Tibial artery (tissue), 4 donors: ENCODE measurements at regions of chr12 and their contacts with region 1.

Region 1: GRCh38 chr12:132828706-132829534 is at the start of gene GOLGA3:
- DNase-seq: peak; percentile 89 to 94
- H3K4me3 ChIP-seq: peak within 1 kb of the TSS; percentile 91 to 97
- H3K27ac ChIP-seq: peak within 1 kb of the TSS; percentile 97
- H3K4me1 ChIP-seq: peaks cover 0 to 26% (median 22%) of the 10 kb centered on the region in 4 donors
- H3K27me3 ChIP-seq: no peaks in the 10 kb centered on the region
- CTCF ChIP-seq: no peak

Region 2: DNA sequence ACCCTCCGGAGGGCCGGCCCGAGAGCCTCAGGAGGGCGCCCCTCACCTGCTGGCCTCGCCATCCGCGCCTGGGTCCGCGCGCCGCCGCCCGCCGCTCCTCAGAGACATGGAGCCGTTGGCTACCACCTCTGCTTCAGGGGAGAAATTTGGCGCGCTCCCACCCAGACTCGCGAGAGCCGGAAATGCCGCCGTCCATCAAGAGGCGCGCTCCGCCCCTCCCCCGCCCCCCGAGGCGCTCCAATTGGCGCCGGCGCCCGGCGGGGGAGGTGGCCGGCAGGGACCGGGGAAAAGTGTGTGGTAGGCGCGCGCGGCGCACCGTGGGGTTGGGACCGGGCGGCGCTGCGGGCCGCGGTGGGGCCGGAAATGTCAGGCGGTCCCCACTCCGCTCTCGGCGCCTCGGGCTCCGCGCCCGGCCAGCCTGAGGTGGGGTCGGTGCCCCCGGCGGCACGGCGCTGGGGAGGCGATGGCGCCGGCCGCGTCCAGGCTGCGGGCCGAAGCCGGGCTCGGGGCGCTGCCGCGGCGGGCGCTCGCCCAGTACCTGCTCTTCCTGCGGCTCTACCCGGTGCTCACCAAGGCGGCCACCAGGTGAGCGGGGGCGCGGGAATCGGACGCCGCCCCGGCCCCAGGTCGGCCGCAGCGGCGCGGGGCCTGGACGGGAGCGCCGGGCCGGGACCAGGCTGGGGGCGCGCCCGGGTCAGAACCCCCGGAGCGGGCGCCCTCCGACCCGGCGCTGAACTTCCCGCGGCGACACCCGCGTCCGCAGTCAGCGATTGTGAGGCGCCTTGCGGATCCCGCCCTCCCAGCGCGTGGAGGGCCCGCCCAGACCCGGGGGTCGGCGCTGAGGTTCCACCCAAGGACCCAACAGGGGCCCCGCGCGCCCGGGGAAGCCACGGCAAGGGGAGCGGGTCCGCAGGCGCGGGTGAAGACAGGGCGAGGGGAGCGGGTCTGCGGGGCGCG is 141.4 kb before region 1 on chr12 and contains the starts of genes POLE and PXMP2:
- intact Hi-C with region 1: loop called (anchors 10 kb)
- DNase-seq: peak; percentile 95 to 98
- H3K4me3 ChIP-seq: peak within 1 kb of the TSS; percentile 93 to 95
- H3K27ac ChIP-seq: peak within 1 kb of the TSS; percentile 79 to 81
- H3K4me1 ChIP-seq: peaks cover 0 to 26% (median 14%) of the 10 kb centered on the region in 4 donors
- H3K27me3 ChIP-seq: no peaks in the 10 kb centered on the region
- CTCF ChIP-seq: peak in 1 of 2 experiments; percentile 6

Region 3: DNA sequence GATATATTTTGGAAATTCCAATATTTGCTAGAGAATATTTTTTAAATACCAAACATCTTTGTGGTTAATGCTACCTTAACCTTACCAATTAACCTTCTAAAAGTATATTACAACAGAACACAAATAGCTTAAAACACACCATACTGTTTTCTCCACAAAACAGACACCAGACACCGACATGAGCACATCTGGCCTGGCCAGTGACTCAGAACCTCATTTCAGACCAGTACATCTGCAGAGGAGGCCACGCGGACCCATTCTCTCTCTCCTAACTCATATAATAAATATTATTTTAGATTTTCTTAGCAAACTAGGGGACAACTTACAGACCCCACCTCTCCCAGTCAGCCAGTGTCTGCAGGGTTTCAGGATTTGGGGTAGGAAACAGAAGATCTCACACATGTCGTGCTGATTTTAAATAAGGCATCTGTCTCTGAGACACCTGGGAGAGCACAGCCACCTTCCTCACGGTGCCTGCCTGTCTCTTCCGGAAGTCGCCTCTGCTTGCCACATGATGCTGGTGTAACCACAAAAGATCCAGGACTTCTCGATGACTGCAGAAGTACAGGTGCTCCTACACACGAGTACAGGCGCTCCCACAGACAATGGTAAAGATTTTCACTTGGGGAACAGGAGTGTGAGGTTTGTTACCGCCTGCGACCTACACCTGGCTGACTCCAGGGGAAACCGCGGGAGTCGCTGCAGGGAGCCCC is 57.6 kb before region 1 on chr12:
- intact Hi-C with region 1: loop called (anchors 10 kb)
- DNase-seq: no peak
- H3K4me3 ChIP-seq: no peak overlapping the region
- H3K27ac ChIP-seq: no peak overlapping the region
- H3K4me1 ChIP-seq: no peaks in the 10 kb centered on the region
- H3K27me3 ChIP-seq: no peaks in the 10 kb centered on the region
- CTCF ChIP-seq: no peak

Region 4: DNA sequence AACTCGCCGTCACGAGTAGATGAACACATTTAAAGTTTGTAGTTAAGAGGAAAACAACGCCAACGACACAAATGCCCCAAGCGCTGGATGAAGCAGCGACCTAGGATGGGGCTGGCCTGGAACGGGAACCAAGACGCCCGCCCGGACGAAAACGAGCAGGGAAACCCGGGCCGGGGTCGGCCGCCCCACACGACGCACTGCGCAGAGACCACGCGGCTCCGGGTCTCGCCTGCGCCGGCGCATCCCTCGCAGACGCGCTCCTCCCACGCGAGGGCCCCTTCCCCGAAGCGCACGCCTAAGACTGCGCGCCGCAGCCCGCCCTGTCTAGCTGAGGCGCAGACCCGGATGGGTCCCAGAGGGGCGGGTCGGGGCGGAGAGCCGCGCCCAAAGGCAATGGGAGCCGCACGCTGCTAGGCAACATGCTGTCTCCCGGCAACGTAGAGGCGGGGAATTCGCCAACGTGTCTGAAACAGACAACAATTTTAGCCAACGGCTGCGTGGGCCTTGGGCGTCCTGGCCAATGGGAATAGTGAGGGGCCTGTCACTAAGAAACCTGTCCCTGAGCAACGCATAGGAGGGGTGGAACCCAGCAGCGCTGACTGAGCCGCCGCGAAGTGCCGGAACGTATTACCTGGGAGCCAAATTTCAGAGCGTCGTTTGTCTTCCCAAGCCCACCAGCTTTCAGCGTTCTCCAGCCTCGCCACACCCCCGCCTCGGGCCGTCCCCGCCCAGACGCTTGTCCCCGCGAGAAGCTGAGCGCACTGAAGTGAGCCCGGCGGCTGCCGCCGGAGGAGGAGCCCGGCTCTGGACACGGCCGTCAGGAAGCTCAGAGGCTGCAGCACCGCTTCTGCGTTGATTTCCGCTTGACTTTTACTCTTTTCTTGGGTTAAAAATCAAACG is 79.5 kb after region 1 on chr12:
- intact Hi-C with region 1: loop called (anchors 2 kb)
- DNase-seq: peak; percentile 95 to 98
- H3K4me3 ChIP-seq: peak overlapping the region; percentile 55 to 70
- H3K27ac ChIP-seq: peak overlapping the region; percentile 82 to 88
- H3K4me1 ChIP-seq: peaks cover 0 to 15% (median 10%) of the 10 kb centered on the region in 4 donors
- H3K27me3 ChIP-seq: no peaks in the 10 kb centered on the region
- CTCF ChIP-seq: peak in 1 of 2 experiments; percentile 9